GM10248 (cell line): ENCODE measurements at regions of chr2 and their contacts with region 1.

Region 1: GRCh38 chr2:195657634-195658540 is 861 bp downstream of the SLC39A10 start:
- DNase-seq: peak; percentile 34
- CTCF ChIP-seq: no peak

Region 2: GRCh38 chr2:195498176-195498575 is 159.7 kb before region 1 on chr2:
- CTCF ChIA-PET with region 1: interaction called, 53 read pairs
- POLR2A ChIA-PET with region 1: no interaction called
- DNase-seq: peak; percentile 26
- CTCF ChIP-seq: peak; percentile 39

Region 3: GRCh38 chr2:195570329-195570728 is 87.6 kb before region 1 on chr2:
- CTCF ChIA-PET with region 1: interaction called, 23 read pairs
- POLR2A ChIA-PET with region 1: interaction called, 3 read pairs
- DNase-seq: no peak
- CTCF ChIP-seq: no peak

Region 4: GRCh38 chr2:195575879-195576401 is 81.9 kb before region 1 on chr2:
- CTCF ChIA-PET with region 1: interaction called, 23 read pairs
- POLR2A ChIA-PET with region 1: interaction called, 3 read pairs
- DNase-seq: peak; percentile 38
- CTCF ChIP-seq: peak; percentile 49

Region 5: DNA sequence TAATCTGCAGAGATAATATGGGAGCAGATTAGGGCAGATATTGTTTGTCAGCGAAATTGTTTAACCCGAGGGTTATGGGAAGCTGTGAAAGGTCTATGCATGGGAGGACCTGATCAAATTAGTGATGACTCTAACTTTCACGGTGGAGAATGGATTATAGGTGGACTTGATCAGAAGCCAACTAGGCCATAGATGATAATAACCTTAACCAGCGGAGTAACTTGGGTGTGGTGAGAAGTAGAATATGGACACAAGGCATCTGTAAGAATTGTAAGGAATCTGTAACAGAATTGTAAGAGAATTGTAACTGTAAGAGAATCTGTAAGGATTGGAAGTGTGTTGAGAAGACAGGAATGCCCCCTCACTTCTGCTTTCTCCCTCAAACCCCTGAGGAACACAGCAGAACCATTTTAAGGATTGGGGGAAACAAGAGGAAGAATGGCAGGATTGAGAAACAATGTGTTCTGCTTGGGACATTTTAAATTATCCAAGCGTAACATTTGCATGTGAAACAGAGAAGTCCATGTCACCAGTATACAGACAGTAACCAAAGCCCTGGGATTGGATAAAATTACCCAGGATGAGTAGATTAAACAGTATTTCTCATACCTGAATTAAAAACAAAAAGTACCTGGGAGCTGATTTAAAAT is 15.7 kb before region 1 on chr2:
- CTCF ChIA-PET with region 1: interaction called, 21 read pairs
- POLR2A ChIA-PET with region 1: interaction called, 3 read pairs
- DNase-seq: no peak
- CTCF ChIP-seq: no peak

Region 6: GRCh38 chr2:195672668-195673067 is 14.8 kb after region 1 on chr2:
- CTCF ChIA-PET with region 1: interaction called, 38 read pairs
- POLR2A ChIA-PET with region 1: no interaction called
- DNase-seq: no peak
- CTCF ChIP-seq: no peak

Region 7: GRCh38 chr2:195709901-195710806 is 52.3 kb after region 1 on chr2:
- CTCF ChIA-PET with region 1: no interaction called
- POLR2A ChIA-PET with region 1: no interaction called
- DNase-seq: no peak
- CTCF ChIP-seq: no peak